Activated B cell treated with CpG ODN at 0.5 μM for 24 hours (primary cell): ENCODE measurements at regions of chr3 and their contacts with region 1.

Region 1: DNA sequence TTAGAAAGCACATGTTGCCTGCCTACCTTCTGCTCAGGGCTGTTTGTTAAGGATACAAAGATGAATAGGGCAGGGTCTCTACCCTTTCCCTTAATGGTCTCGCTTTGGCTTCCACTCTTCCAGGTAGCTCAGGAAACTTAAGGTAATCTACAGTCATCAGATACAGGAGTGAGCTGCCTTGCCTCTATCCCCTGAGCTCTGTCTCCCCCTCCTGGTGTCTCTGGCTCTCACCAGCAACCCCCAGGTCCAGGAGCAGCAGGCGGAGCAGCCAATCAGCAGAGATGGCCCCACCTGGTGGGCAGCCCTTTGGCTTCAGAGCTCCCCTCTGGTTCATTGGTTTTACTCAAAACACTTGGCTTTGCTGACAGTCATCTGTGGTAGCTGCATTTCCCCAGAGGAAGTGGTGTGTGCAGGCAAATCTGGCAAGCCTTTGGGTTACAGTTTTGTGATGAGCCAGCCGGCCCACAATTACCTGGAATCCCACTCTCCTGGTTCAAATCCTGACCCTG is 8.5 kb upstream of the CX3CR1 start:
- DNase-seq: peak; percentile 75
- ATAC-seq: peak; percentile 99
- H3K4me3 Mint-ChIP-seq: no peak overlapping the region
- H3K27ac Mint-ChIP-seq: peak overlapping the region; percentile 6
- H3K4me1 Mint-ChIP-seq: peaks cover 31% of the 10 kb centered on the region
- H3K27me3 Mint-ChIP-seq: peaks cover 4% of the 10 kb centered on the region
- CTCF ChIP-seq: peak; percentile 50

Region 2: DNA sequence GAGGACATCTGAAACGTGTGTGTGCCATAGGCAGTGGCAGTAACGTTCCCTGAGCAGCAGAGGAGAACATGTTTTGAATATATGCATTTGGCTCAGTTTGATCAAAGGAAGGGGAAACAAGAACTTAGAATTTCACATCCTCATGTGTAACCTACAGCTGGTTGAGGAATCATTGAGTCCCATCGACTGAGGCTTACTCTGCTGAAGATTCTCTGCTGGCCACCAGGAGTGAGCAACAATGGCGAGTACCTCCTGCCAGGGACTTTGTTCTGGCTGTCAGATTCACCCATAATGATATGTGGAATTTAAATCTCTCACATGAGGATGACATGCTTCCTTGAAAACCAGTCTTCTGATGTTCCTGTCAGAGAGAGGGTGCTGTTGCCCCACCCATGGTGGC is 202.2 kb before region 1 on chr3:
- CTCF ChIA-PET with region 1: interaction called, 8 read pairs
- POLR2A ChIA-PET with region 1: interaction called, 3 read pairs
- intact Hi-C with region 1: loop called (anchors 5 kb)
- DNase-seq: no peak
- ATAC-seq: peak; percentile 92
- H3K4me3 Mint-ChIP-seq: peak overlapping the region; percentile 37
- H3K27ac Mint-ChIP-seq: peak overlapping the region; percentile 67
- H3K4me1 Mint-ChIP-seq: peaks cover 25% of the 10 kb centered on the region
- H3K27me3 Mint-ChIP-seq: no peaks in the 10 kb centered on the region
- CTCF ChIP-seq: no peak

Region 3: GRCh38 chr3:39126532-39127071 is 161.8 kb before region 1 on chr3:
- CTCF ChIA-PET with region 1: interaction called, 37 read pairs
- POLR2A ChIA-PET with region 1: interaction called, 8 read pairs
- intact Hi-C with region 1: loop called (anchors 1 kb)
- DNase-seq: no peak
- ATAC-seq: peak; percentile 38
- H3K4me3 Mint-ChIP-seq: peak overlapping the region; percentile 1
- H3K27ac Mint-ChIP-seq: no peak overlapping the region
- H3K4me1 Mint-ChIP-seq: peaks cover 58% of the 10 kb centered on the region
- H3K27me3 Mint-ChIP-seq: no peaks in the 10 kb centered on the region
- CTCF ChIP-seq: no peak

Region 4: DNA sequence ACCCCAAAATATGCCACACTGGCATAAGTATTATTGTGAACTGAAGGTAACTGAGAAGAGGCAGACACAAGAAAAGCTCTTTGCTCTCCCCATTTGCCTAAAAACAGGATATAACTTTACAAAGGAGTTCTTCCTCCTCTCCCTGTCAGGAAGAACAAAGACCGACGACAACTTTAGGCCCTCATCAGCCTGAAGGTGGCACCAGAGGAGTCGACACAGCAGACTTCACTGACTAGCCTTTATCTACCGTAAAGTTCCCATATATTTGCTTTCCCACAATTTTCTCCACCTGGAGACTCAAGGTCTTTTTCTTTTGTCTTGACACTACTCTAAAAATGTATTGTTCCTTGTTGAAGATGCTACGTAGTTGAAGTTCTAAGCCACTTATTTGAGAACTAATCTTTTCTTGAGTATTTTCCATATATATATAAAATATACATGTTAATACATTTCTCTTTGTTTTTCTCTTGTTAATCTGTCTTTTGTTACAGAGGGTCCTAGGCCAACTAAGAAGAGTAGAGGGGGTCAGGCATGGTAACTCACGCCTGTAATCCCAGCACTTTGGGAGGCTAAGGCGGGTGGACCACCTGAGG is 79.8 kb before region 1 on chr3:
- CTCF ChIA-PET with region 1: interaction called, 209 read pairs
- POLR2A ChIA-PET with region 1: interaction called, 3 read pairs
- intact Hi-C with region 1: loop called (anchors 1 kb)
- DNase-seq: no peak
- ATAC-seq: peak; percentile 58
- H3K4me3 Mint-ChIP-seq: no peak overlapping the region
- H3K27ac Mint-ChIP-seq: no peak overlapping the region
- H3K4me1 Mint-ChIP-seq: peaks cover 8% of the 10 kb centered on the region
- H3K27me3 Mint-ChIP-seq: peaks cover 4% of the 10 kb centered on the region
- CTCF ChIP-seq: peak; percentile 18

Region 5: DNA sequence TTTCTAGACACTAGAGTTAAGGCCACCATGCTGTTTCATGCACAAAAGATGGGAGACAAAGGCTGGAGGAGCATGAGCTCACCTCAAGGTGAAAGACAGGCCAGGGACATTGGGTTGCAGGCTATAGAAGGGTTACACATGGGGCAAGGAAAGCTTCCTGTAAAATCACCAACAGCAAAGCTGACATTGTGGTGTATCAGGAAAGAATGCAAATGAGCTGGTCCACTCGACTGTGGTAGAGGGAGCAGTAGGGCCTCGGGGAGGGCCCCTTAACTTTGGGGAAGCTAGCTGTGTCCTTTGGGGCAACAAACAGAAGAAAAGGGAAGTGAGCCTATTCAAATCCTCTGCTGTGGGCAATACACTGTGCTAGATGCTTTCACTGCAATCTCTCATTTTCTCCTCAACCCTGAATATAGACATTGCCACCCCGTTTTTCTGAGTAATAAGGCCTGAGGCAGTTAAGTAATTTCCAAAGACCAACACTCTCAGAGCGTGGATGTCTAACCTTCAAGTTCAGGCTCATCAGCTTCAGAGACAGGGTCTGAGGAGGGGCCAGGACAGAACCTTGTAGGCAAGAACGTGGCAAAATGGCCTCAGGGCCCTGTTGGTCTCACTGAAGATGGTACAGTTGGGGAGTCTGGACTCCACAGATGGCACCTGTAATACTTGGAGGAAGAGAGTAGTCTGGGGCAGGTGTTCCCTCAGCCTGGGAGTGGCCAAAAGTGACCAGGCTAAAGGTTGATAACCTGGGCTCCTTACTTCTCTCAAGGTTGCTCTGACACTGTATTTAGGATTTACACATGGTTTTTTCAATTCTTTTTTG is 32.6 kb before region 1 on chr3:
- CTCF ChIA-PET with region 1: interaction called, 44 read pairs
- POLR2A ChIA-PET with region 1: interaction called, 29 read pairs
- intact Hi-C with region 1: loop called (anchors 1 kb)
- DNase-seq: peak; percentile 57
- ATAC-seq: peak; percentile 96
- H3K4me3 Mint-ChIP-seq: peak overlapping the region; percentile 58
- H3K27ac Mint-ChIP-seq: peak overlapping the region; percentile 95
- H3K4me1 Mint-ChIP-seq: peaks cover 86% of the 10 kb centered on the region
- H3K27me3 Mint-ChIP-seq: no peaks in the 10 kb centered on the region
- CTCF ChIP-seq: no peak

Region 6: GRCh38 chr3:39378088-39378487 is 89.7 kb after region 1 on chr3:
- CTCF ChIA-PET with region 1: interaction called, 10 read pairs
- POLR2A ChIA-PET with region 1: interaction called, 3 read pairs
- intact Hi-C with region 1: loop called (anchors 1 kb)
- DNase-seq: no peak
- ATAC-seq: peak; percentile 71
- H3K4me3 Mint-ChIP-seq: no peak overlapping the region
- H3K27ac Mint-ChIP-seq: no peak overlapping the region
- H3K4me1 Mint-ChIP-seq: peaks cover 8% of the 10 kb centered on the region
- H3K27me3 Mint-ChIP-seq: no peaks in the 10 kb centered on the region
- CTCF ChIP-seq: peak; percentile 64